Dorsolateral prefrontal cortex (tissue), 120 donors: ENCODE measurements at regions of chr2 and their contacts with region 1.

Region 1: DNA sequence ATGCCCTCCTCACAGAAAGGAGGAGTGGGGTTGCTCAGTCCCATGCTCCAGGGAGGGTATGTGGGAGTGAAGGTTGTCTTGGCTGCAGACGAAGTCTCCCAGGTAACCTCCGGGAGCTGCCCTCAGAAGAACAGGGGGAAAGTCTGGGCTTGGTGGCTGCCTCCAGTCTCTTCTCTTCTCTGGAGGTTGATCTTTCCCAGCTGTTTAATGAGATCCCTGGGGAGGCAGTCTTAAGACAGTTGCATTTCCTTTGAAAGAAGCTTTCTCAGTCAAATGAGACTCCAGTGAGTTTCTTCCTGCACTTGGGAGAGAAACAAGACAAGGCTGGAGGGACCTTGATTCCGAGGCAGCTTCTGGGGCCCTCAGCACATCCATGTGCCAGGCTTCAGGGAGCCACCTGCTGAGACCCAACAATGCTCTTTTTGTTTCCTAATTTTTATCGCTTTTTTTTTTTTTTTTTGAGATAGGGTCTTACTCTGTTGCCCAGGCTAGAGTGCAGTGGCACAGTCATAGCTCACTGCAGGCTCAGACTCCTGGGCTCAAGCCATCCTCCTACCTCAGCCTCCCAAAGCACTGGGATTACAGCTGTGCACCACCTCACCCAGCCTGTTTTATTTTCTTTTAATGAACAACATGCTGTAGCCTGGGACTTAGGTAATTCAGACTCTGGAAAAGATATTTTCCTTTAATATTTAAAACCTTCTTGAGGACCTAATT is 71.7 kb upstream of the TPO start:
- DNase-seq: no peak
- H3K4me3 ChIP-seq: no peak overlapping the region
- H3K27ac ChIP-seq: no peak overlapping the region
- H3K27me3 ChIP-seq: no peaks in the 10 kb centered on the region
- CTCF ChIP-seq: no peak

Region 2: GRCh38 chr2:1366546-1367134 is 25.1 kb after region 1 on chr2:
- intact Hi-C with region 1: loop called in 1 of 2 experiments (anchors 2 kb)
- DNase-seq: peak; percentile 27 to 92 (median 87)
- H3K4me3 ChIP-seq: peak overlapping the region in 40 of 59 donors; percentile 2 to 53 (median 22)
- H3K27ac ChIP-seq: peak overlapping the region in 42 of 59 donors; percentile 2 to 77 (median 48)
- H3K27me3 ChIP-seq: no peaks in the 10 kb centered on the region
- CTCF ChIP-seq: peak in 23 of 56 donors; percentile 6 to 56 (median 25)

Region 3: DNA sequence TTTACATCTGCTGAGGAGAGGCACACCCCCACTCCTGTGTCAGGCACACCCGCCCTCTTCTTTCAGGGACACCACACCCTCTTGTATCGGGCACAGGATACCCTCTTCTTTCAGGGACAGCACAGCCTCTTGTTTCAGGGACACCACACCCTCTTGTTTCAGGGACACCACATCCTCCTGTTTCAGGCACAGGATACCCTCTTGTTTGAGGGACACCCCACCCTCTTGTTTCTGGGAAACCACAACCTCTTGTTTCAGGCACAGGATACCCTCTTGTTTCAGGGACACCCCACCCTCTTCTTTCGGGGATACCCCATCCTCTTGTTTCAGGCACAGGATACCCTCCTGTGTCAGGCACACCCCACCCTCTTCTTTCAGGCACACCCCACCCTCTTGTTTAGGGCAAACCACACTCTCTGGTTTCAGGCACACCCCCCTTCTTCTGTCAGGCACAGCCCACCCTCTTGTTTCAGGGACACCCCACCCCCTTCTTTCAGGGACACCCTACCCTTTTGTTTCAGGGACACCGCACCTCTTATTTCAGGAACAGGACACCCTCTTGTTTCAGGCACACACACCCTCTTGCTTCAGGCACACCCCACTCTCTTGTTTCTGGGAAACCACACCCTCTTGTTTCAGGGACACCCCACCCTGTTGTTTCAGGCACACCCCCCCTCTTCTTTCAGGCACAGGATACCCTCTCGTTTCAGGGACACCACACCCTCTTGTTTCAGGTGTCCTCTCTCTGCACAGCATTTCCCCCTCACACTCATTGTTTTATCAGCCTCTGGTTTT is 167.9 kb after region 1 on chr2:
- intact Hi-C with region 1: no loop called
- DNase-seq: peak in 2 of 10 donors; percentile 1 to 4
- H3K4me3 ChIP-seq: no peak overlapping the region
- H3K27ac ChIP-seq: no peak overlapping the region
- H3K27me3 ChIP-seq: peaks cover 0 to 11% (median 0%) of the 10 kb centered on the region in 45 donors
- CTCF ChIP-seq: no peak